PC-9 (cell line): ENCODE measurements at regions of chr13 and their contacts with region 1.

Region 1: GRCh38 chr13:97432917-97433726 is 847 bp upstream of the RAP2A start:
- DNase-seq: peak; percentile 99 to 100
- H3K4me3 ChIP-seq: peak overlapping the region; percentile 100
- H3K27ac ChIP-seq: peak overlapping the region; percentile 99
- H3K4me1 ChIP-seq: peaks cover 25% of the 10 kb centered on the region
- H3K27me3 ChIP-seq: no peaks in the 10 kb centered on the region
- CTCF ChIP-seq: no peak

Region 2: DNA sequence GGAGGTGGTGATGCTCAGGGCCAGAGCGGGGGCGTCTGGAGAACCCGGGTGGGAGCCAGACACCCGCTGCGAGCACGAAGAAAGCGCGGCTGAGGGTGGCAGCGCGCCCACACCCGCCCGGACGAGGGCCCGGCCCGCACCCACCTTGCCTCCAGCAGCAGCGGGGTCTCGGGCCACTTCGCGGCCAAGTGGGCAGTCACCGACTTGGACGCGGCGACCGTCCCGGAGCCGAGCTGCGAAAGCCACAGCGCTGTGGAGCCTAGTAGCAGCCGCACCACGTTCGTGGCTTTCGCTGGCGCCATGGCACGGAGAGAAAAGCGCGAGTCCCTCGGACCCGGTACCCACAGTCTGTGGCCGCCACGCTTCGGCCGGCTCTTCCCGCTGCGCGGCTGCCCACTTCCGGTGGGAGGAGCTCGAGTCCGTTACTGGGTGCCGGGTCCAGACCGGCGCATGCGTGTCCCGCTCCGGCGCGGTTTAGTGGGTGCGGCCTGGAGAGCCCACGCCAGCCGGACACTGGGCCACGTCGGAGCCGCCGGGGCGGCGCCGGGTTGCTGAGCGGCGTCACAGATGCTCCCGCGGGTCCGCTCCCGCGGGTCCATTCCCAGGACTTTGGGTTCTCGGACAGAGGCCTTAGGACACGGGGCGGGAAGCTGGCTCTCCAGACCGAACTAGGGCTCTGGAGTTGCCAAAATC is 1380.0 kb before region 1 on chr13 and contains the start of gene UGGT2:
- CTCF ChIA-PET with region 1: no interaction called
- POLR2A ChIA-PET with region 1: interaction called, 7 read pairs
- intact Hi-C with region 1: loop called (anchors 1 kb)
- DNase-seq: peak; percentile 86 to 93
- H3K4me3 ChIP-seq: peak within 1 kb of the TSS; percentile 85
- H3K27ac ChIP-seq: peak within 1 kb of the TSS; percentile 82
- H3K4me1 ChIP-seq: peaks cover 9% of the 10 kb centered on the region
- H3K27me3 ChIP-seq: no peaks in the 10 kb centered on the region
- CTCF ChIP-seq: no peak; the same call in 1 of the 2 replicates
- total RNA-seq, gene UGGT2: 27.5 and 27.7 TPM in 2 replicates

Region 3: DNA sequence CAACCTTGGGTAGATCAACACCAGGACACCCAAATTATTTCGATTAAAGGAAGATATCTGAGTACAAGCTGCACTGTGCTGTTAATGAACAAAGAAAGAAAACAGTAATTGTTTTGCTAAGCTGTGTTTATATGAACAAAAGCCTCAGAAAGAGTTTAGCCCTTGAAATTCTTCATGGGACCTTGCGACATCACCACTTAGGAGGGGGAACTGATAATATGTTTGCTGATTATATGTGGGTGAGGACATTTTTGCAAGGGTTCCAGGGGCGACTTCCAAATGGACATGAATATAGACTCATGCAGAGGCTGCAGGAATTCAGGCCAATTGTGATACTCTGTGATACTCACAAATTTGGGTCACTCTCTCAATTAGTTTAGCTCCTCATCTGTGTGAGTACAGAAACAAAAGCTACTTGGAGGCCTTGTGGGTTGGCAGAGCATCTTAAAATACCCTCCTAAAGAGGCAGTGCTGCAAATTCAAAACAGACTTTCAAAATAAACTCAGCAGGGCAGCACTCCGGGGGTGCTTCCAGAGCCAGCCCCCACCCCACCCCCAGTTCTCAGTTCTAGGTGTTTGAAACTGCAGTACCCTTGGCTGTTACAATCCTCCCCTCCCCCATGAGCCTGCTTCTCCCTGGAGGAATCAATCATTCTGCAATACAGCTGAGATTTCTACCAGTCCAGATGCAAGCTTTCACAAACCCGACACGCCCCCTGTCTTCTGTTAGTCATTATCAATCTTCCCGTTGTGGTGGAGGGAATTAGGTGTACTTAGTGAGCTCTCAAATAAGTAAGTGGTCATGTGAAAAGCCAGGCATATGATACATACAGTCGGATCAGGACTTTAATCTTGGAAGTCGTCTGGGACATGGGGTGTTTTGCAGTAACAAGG is 308.0 kb before region 1 on chr13:
- CTCF ChIA-PET with region 1: interaction called, 6 read pairs
- POLR2A ChIA-PET with region 1: no interaction called
- intact Hi-C with region 1: loop called (anchors 1 kb)
- DNase-seq: peak; percentile 39 to 90
- H3K4me3 ChIP-seq: peak overlapping the region; percentile 37; the same call in 1 of the 2 replicates
- H3K27ac ChIP-seq: peak overlapping the region; percentile 81
- H3K4me1 ChIP-seq: peaks cover 81% of the 10 kb centered on the region
- H3K27me3 ChIP-seq: no peaks in the 10 kb centered on the region
- CTCF ChIP-seq: peak; percentile 55; the same call in 1 of the 2 replicates

Region 4: GRCh38 chr13:97257800-97258799 is 175.0 kb before region 1 on chr13:
- CTCF ChIA-PET with region 1: no interaction called
- POLR2A ChIA-PET with region 1: interaction called, 6 read pairs
- intact Hi-C with region 1: loop called (anchors 1 kb)
- DNase-seq: peak; percentile 71 to 100
- H3K4me3 ChIP-seq: peak overlapping the region; percentile 34
- H3K27ac ChIP-seq: peak overlapping the region; percentile 98
- H3K4me1 ChIP-seq: peaks cover 82% of the 10 kb centered on the region
- H3K27me3 ChIP-seq: no peaks in the 10 kb centered on the region
- CTCF ChIP-seq: peak; percentile 56; the same call in 1 of the 2 replicates

Region 5: GRCh38 chr13:97403893-97404750 is 29.0 kb before region 1 on chr13:
- CTCF ChIA-PET with region 1: no interaction called
- POLR2A ChIA-PET with region 1: no interaction called
- intact Hi-C with region 1: no loop called
- DNase-seq: no peak
- H3K4me3 ChIP-seq: no peak overlapping the region
- H3K27ac ChIP-seq: no peak overlapping the region
- H3K4me1 ChIP-seq: no peaks in the 10 kb centered on the region
- H3K27me3 ChIP-seq: no peaks in the 10 kb centered on the region
- CTCF ChIP-seq: no peak

Region 6: DNA sequence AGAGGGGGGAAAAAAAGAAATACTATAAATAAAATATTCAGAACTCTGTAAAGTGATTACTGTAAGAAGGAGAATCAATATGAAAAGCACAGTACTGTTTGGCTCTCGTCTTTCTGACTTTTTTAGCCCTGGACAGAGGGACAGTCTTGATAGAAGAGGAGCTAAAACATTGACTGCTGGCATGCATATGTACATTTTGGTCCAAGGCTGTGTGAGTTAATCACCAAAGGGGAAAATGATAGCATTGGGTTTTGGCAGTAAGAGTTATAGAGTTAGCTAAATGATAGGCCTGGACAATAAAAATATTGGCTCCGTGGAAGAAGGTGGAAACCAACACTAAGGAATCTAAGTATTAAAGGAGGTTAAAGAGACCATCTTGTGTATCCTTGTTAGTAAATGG is 51.2 kb after region 1 on chr13:
- CTCF ChIA-PET with region 1: no interaction called
- POLR2A ChIA-PET with region 1: no interaction called
- intact Hi-C with region 1: no loop called
- DNase-seq: peak in 1 of 2 experiments; percentile 2
- H3K4me3 ChIP-seq: no peak overlapping the region
- H3K27ac ChIP-seq: no peak overlapping the region
- H3K4me1 ChIP-seq: no peaks in the 10 kb centered on the region
- H3K27me3 ChIP-seq: no peaks in the 10 kb centered on the region
- CTCF ChIP-seq: no peak